ENCODE measurements at regions of chr9 and their contacts with region 1.

Region 1: DNA sequence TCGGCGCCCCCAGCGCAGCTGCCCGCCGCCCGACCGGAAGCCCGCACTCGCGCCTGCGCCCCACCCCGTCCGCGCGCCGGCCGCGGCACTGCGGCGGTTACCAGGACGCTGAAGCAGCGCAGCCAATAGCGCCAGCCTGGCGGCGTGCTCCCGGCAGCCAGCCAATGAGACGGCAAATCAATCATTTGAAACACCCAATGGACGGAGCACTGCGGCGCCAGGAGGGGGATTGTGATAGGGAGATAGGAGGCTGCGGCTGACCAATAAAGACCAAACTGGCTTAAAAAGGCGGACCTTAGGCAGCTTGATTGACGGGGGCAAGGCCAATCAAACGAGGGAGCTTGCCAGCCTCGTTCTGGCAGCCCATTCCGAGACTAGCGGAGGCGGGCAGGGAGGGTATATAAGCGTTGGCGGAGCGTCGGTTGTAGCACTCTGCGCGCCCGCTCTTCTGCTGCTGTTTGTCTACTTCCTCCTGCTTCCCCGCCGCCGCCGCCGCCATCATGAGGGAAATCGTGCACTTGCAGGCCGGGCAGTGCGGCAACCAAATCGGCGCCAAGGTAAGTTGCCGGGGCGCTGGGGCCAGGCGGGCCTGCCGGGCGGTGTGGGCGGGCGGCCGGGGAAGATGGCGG is at the start of gene TUBB4B:
- DNase-seq: peak; percentile 100
- H3K4me3 ChIP-seq: peak within 1 kb of the TSS; percentile 79 to 90 (median 86)
- H3K27ac ChIP-seq: peak within 1 kb of the TSS; percentile 98 to 100 (median 98)
- H3K4me1 ChIP-seq: peaks cover 2 to 69% (median 53%) of the 10 kb centered on the region in 4 donors
- H3K27me3 ChIP-seq: no peaks in the 10 kb centered on the region
- CTCF ChIP-seq: no peak
- EP300 ChIP-seq: no peak
- POLR2A ChIP-seq: peak; percentile 100
- total RNA-seq, gene TUBB4B: 141 to 196 (median 164) TPM

Region 2: DNA sequence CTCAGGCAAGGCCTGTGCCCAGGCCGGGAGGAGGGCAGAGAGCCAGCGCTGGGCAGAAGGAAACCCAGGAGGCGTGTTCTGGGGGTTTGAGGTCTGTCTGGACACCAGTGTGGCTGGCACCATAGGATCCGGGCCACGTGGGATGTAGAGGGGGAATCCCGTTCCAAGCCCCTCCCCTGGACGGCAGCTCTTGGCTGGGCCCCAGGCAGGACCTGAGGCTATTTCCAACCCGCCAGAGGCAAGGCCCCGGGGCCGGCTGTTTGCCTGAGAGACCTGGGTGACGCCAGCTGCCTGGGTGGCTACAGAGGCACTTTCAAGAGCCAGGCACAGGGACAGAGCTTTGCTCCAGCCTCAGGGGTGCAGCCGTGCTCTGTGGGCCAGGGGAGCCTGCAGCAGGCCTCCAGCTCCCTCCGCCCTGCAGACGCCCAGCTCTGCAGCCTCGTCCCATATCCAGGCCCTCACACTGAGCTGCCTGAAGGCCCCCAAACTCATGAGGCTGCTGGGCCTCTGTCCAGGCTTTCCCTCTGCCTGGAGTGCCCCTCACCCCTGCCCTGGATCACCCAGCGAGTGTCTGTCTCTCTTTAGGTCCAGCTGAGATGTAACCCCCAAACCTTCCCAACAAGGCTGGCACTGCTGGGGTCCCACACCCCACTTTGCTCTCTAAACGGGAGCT is 634.9 kb before region 1 on chr9:
- intact Hi-C with region 1: no loop called
- DNase-seq: peak; percentile 90
- H3K4me3 ChIP-seq: no peak overlapping the region
- H3K27ac ChIP-seq: peak overlapping the region; percentile 29 to 74 (median 68)
- H3K4me1 ChIP-seq: peaks cover 0 to 44% (median 27%) of the 10 kb centered on the region in 4 donors
- H3K27me3 ChIP-seq: peaks cover 0 to 13% (median 0%) of the 10 kb centered on the region in 3 donors
- CTCF ChIP-seq: no peak
- EP300 ChIP-seq: no peak
- POLR2A ChIP-seq: no peak

Region 3: DNA sequence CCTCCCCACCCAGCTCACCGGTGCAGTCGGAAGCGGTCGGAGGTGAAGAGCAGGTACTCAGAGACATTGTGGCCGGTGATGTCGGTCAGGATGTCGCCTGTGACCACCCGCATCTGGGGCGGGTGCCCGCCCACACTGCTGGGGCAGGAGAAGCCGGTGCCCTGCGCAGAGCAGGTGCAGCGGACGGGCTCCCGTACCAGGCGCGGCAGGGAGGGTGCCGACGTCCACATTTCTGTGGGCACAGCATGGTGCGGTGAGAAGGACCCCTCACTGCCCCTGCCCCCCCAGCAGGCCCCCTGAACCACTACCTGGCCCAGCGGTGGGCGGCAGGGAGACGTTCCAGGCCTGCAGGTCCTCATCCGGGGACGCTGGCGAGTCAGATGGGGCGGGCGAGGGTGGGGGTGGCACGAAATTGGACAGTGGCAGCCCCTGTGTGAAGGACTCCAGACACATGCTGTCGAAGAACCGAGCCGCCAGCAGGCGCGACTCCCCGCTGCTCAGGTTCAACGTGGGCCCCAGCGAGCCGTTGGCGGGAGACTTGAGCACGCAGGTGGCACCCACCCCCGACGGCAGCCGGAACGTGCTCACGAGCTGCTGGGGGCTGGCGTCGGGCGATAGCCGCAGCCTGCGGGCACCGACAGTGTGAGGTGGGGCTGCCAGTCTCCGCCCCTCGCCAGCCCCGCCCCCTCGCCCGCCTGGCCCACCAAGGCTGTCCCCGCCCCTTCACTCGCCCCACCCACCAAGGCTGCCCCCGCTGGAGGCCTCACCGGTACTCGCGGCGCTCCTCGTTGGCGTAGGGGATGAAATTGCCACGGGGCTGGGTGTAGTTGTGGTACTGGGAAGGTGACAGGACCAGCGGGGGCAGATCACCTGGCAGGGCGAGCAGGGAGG is 228.0 kb before region 1 on chr9:
- intact Hi-C with region 1: no loop called
- DNase-seq: no peak
- H3K4me3 ChIP-seq: no peak overlapping the region
- H3K27ac ChIP-seq: no peak overlapping the region
- H3K4me1 ChIP-seq: no peaks in the 10 kb centered on the region
- H3K27me3 ChIP-seq: no peaks in the 10 kb centered on the region
- CTCF ChIP-seq: no peak
- EP300 ChIP-seq: no peak
- POLR2A ChIP-seq: no peak

Region 4: GRCh38 chr9:137188490-137189296 is 52.3 kb before region 1 on chr9 and contains the starts of genes ANAPC2 and SSNA1:
- intact Hi-C with region 1: loop called (anchors 5 kb)
- DNase-seq: peak; percentile 96
- H3K4me3 ChIP-seq: peak within 1 kb of the TSS; percentile 62 to 96 (median 72)
- H3K27ac ChIP-seq: peak within 1 kb of the TSS; percentile 95 to 99 (median 97)
- H3K4me1 ChIP-seq: peaks cover 0 to 47% (median 45%) of the 10 kb centered on the region in 4 donors
- H3K27me3 ChIP-seq: no peaks in the 10 kb centered on the region
- CTCF ChIP-seq: no peak
- EP300 ChIP-seq: no peak
- POLR2A ChIP-seq: peak; percentile 70 to 72
- total RNA-seq, gene ANAPC2: 21.0 to 27.4 (median 24.6) TPM
- total RNA-seq, gene SSNA1: 39.6 to 122 (median 76.3) TPM

Region 5: GRCh38 chr9:137254624-137255447 is 13.9 kb after region 1 on chr9 and contains the start of gene NELFB:
- intact Hi-C with region 1: loop called (anchors 2 kb)
- DNase-seq: peak; percentile 95
- H3K4me3 ChIP-seq: peak within 1 kb of the TSS; percentile 81 to 95 (median 84)
- H3K27ac ChIP-seq: peak within 1 kb of the TSS; percentile 83 to 88 (median 86)
- H3K4me1 ChIP-seq: peaks cover 0 to 27% (median 26%) of the 10 kb centered on the region in 4 donors
- H3K27me3 ChIP-seq: peaks cover 0 to 10% (median 6%) of the 10 kb centered on the region in 3 donors
- CTCF ChIP-seq: no peak
- EP300 ChIP-seq: no peak
- POLR2A ChIP-seq: peak in 1 of 2 donors; percentile 48
- total RNA-seq, gene NELFB: 24.7 to 36.5 (median 33.2) TPM